CD8-positive, alpha-beta T cell (primary cell): ENCODE measurements at regions of chr5 and their contacts with region 1.

Region 1: GRCh38 chr5:39283231-39283818 is 64.0 kb upstream of the FYB1 start:
- DNase-seq: peak in 8 of 9 experiments; percentile 40 to 90 (median 64)
- ATAC-seq: peak; percentile 100
- H3K4me3 ChIP-seq: no peak overlapping the region
- H3K4me3 Mint-ChIP-seq: no peak overlapping the region
- H3K27ac ChIP-seq: no peak overlapping the region
- H3K27ac Mint-ChIP-seq: peak overlapping the region; percentile 73
- H3K4me1 ChIP-seq: peaks cover 8% of the 10 kb centered on the region
- H3K4me1 Mint-ChIP-seq: peaks cover 30% of the 10 kb centered on the region
- H3K27me3 ChIP-seq: no peaks in the 10 kb centered on the region
- H3K27me3 Mint-ChIP-seq: peaks cover 3% of the 10 kb centered on the region
- CTCF ChIP-seq: peak; percentile 82

Region 2: GRCh38 chr5:39005566-39006232 is 277.6 kb before region 1 on chr5:
- CTCF ChIA-PET with region 1: interaction called, 3 read pairs
- POLR2A ChIA-PET with region 1: no interaction called
- intact Hi-C with region 1: loop called in 1 of 2 experiments (anchors 2 kb)
- DNase-seq: peak in 4 of 9 experiments; percentile 8 to 56 (median 34)
- ATAC-seq: peak; percentile 66
- H3K4me3 ChIP-seq: no peak overlapping the region
- H3K4me3 Mint-ChIP-seq: no peak overlapping the region
- H3K27ac ChIP-seq: no peak overlapping the region
- H3K27ac Mint-ChIP-seq: peak overlapping the region; percentile 11
- H3K4me1 ChIP-seq: peaks cover 11% of the 10 kb centered on the region
- H3K4me1 Mint-ChIP-seq: peaks cover 57% of the 10 kb centered on the region
- H3K27me3 ChIP-seq: no peaks in the 10 kb centered on the region
- H3K27me3 Mint-ChIP-seq: no peaks in the 10 kb centered on the region
- CTCF ChIP-seq: no peak

Region 3: GRCh38 chr5:39148983-39149534 is 134.3 kb before region 1 on chr5:
- CTCF ChIA-PET with region 1: interaction called, 29 read pairs
- POLR2A ChIA-PET with region 1: no interaction called
- intact Hi-C with region 1: loop called (anchors 1 kb)
- DNase-seq: peak in 2 of 9 experiments; percentile 59 to 72
- ATAC-seq: peak; percentile 41
- H3K4me3 ChIP-seq: no peak overlapping the region
- H3K4me3 Mint-ChIP-seq: peak overlapping the region; percentile 13
- H3K27ac ChIP-seq: peak overlapping the region in 1 of 2 experiments; percentile 61
- H3K27ac Mint-ChIP-seq: peak overlapping the region; percentile 92
- H3K4me1 ChIP-seq: peaks cover 42% of the 10 kb centered on the region
- H3K4me1 Mint-ChIP-seq: peaks cover 76% of the 10 kb centered on the region
- H3K27me3 ChIP-seq: no peaks in the 10 kb centered on the region
- H3K27me3 Mint-ChIP-seq: no peaks in the 10 kb centered on the region
- CTCF ChIP-seq: peak; percentile 69

Region 4: DNA sequence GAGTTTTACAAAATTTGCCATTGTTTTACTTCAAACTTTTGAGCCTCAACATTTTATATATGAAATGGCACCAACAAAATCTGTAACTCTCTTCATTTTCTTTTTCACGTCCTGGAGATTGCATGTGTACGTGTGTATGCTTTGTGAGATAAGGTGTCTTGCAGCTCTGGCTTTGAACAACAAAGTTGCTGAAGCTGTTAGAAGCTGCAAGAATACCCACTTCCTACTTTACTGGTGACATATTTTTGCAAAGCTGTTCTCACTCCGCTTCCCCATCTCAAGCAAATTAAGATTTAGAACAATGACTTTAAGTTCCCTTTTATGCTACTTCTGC is 105.7 kb before region 1 on chr5:
- CTCF ChIA-PET with region 1: interaction called, 23 read pairs
- POLR2A ChIA-PET with region 1: interaction called, 3 read pairs
- intact Hi-C with region 1: loop called in 1 of 2 experiments (anchors 1 kb)
- DNase-seq: peak in 2 of 9 experiments; percentile 73 to 86
- ATAC-seq: peak; percentile 64
- H3K4me3 ChIP-seq: peak overlapping the region; percentile 20 to 36
- H3K4me3 Mint-ChIP-seq: peak overlapping the region; percentile 63
- H3K27ac ChIP-seq: peak overlapping the region; percentile 62 to 76
- H3K27ac Mint-ChIP-seq: peak overlapping the region; percentile 96
- H3K4me1 ChIP-seq: peaks cover 96% of the 10 kb centered on the region
- H3K4me1 Mint-ChIP-seq: peaks cover 96% of the 10 kb centered on the region
- H3K27me3 ChIP-seq: no peaks in the 10 kb centered on the region
- H3K27me3 Mint-ChIP-seq: no peaks in the 10 kb centered on the region
- CTCF ChIP-seq: no peak

Region 5: DNA sequence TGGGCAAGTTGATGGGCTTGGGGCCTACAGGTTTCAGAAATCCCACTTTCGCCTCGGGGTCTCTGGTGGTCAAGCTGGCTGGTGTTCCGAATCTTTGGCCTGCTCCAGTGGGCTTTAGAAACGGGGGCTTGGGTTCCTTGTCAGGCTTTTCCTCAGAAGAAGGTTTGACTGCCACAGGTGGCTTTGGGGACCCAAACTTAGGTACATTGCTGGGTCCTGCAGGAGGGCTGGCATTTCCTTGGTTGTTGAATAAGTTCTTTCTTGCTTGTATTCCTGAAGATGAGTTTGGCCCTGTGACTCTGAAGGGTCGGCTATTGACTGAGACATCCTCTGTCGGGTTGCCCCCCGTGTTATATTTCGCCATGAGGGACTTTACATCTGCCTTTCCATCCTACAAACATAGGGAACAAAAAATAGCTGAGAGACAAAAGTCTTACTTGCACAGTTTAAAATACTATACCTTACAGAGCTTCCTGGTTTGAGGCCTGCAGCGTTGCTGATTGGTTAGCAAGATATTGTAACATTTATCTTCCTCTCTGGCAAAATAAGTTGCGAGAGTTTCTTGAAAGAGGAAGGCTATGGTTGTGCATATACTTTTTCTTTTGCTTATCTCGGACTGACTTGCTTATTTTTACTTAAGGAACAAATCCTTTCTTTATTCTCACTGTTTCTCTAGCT is 80.6 kb before region 1 on chr5:
- CTCF ChIA-PET with region 1: interaction called, 64 read pairs
- POLR2A ChIA-PET with region 1: interaction called, 3 read pairs
- intact Hi-C with region 1: loop called (anchors 1 kb)
- DNase-seq: peak in 4 of 9 experiments; percentile 49 to 77 (median 64)
- ATAC-seq: peak; percentile 58
- H3K4me3 ChIP-seq: peak overlapping the region; percentile 48 to 75
- H3K4me3 Mint-ChIP-seq: peak overlapping the region; percentile 93
- H3K27ac ChIP-seq: peak overlapping the region; percentile 70 to 88
- H3K27ac Mint-ChIP-seq: peak overlapping the region; percentile 96
- H3K4me1 ChIP-seq: peaks cover 48% of the 10 kb centered on the region
- H3K4me1 Mint-ChIP-seq: peaks cover 57% of the 10 kb centered on the region
- H3K27me3 ChIP-seq: no peaks in the 10 kb centered on the region
- H3K27me3 Mint-ChIP-seq: no peaks in the 10 kb centered on the region
- CTCF ChIP-seq: no peak

Region 6: GRCh38 chr5:39231705-39232525 is 51.4 kb before region 1 on chr5:
- CTCF ChIA-PET with region 1: interaction called, 212 read pairs
- POLR2A ChIA-PET with region 1: no interaction called
- intact Hi-C with region 1: no loop called
- DNase-seq: no peak
- ATAC-seq: peak; percentile 71
- H3K4me3 ChIP-seq: no peak overlapping the region
- H3K4me3 Mint-ChIP-seq: no peak overlapping the region
- H3K27ac ChIP-seq: no peak overlapping the region
- H3K27ac Mint-ChIP-seq: peak overlapping the region; percentile 43
- H3K4me1 ChIP-seq: peaks cover 5% of the 10 kb centered on the region
- H3K4me1 Mint-ChIP-seq: peaks cover 14% of the 10 kb centered on the region
- H3K27me3 ChIP-seq: no peaks in the 10 kb centered on the region
- H3K27me3 Mint-ChIP-seq: no peaks in the 10 kb centered on the region
- CTCF ChIP-seq: no peak